WTC11 (cell line): ENCODE measurements at regions of chr11 and their contacts with region 1.

Region 1: GRCh38 chr11:1262172-1263006 is 39.5 kb downstream of the MUC5B start:
- DNase-seq: peak; percentile 87
- ATAC-seq: peak; percentile 91
- H3K4me3 Mint-ChIP-seq: peak overlapping the region; percentile 59
- H3K27ac Mint-ChIP-seq: no peak overlapping the region
- H3K4me1 Mint-ChIP-seq: peaks cover 3% of the 10 kb centered on the region; the same call in 1 of the 2 replicates
- H3K27me3 Mint-ChIP-seq: peaks cover 11% of the 10 kb centered on the region
- CTCF ChIP-seq: no peak

Region 2: GRCh38 chr11:1389103-1389931 is 126.9 kb after region 1 on chr11:
- CTCF ChIA-PET with region 1: interaction called, 13 read pairs
- POLR2A ChIA-PET with region 1: no interaction called
- DNase-seq: peak; percentile 98
- ATAC-seq: peak; percentile 96
- H3K4me3 Mint-ChIP-seq: peak overlapping the region; percentile 72
- H3K27ac Mint-ChIP-seq: no peak overlapping the region
- H3K4me1 Mint-ChIP-seq: peaks cover 14% of the 10 kb centered on the region
- H3K27me3 Mint-ChIP-seq: peaks cover 21% of the 10 kb centered on the region
- CTCF ChIP-seq: no peak

Region 3: GRCh38 chr11:1482581-1483444 is 220.4 kb after region 1 on chr11:
- CTCF ChIA-PET with region 1: no interaction called
- POLR2A ChIA-PET with region 1: no interaction called
- DNase-seq: peak; percentile 42
- ATAC-seq: no peak
- H3K4me3 Mint-ChIP-seq: no peak overlapping the region
- H3K27ac Mint-ChIP-seq: no peak overlapping the region
- H3K4me1 Mint-ChIP-seq: 0 out of 2 replicates have a peak, but pooled peaks cover 2% of the 10 kb centered on the region
- H3K27me3 Mint-ChIP-seq: no peaks in the 10 kb centered on the region
- CTCF ChIP-seq: no peak